Activated T-helper 1 cell treated with anti-CD3 and anti-CD28 coated beads, Interleukin-12 subunit alpha, Interleukin-12 subunit beta, Interleukin-2, Interleukin-4 antibody, amounts not matched to agents 30 ng/mL and 10 ng/mL and 1 ng/mL, durations not matched to agents 14 hours and 24 hours and 36 hours (primary cell): ENCODE measurements at regions of chr3 and their contacts with region 1.

Region 1: DNA sequence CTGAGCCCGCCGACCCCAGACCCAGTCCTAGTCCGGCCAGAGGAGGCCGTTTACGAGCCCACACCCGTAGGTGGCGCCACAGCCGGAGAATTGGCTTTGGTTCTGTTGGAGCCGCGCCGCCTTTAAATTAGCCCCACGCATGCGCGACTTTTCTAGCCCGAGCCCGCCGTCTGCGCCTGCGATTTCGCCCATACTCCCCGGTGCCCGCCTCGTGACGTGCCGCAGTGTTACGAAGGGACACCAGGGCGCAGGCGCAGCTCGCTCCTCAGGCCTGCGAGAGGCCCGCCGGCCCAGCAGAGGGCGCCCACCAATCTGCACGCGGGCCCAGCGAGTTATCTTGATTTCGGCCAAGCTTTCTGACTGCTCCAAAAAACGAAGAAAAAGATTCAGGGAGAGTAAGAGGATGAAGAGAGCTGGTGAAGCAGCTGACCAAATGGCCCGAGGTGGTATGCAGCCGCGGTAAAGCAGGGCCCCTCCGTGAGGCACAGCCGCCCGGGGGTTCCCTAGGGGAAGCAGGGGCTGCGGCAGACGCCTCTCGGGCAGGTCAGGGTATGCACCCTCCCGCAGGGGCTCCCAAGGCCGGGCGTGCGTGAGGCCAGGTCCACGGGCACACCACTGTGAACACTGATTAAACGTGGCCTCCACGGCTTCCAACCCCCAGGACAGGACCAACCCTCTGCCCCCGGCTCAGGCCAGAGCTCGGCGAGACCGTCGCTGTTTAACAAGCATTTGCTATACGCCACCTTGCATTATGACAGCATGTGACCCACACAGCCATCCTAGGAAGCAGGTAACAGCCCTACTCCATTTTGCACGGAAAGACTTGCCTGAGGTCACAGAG is 32.8 kb downstream of the RPN1 start:
- DNase-seq: peak; percentile 98
- H3K4me3 Mint-ChIP-seq: peak overlapping the region; percentile 98
- H3K27ac Mint-ChIP-seq: peak overlapping the region; percentile 97
- H3K4me1 Mint-ChIP-seq: peaks cover 29% of the 10 kb centered on the region
- H3K27me3 Mint-ChIP-seq: no peaks in the 10 kb centered on the region

Region 2: GRCh38 chr3:128123538-128124368 is 494.0 kb before region 1 on chr3 and contains the start of gene RUVBL1:
- intact Hi-C with region 1: loop called (anchors 1 kb)
- DNase-seq: peak; percentile 95
- H3K4me3 Mint-ChIP-seq: peak within 1 kb of the TSS; percentile 99
- H3K27ac Mint-ChIP-seq: peak within 1 kb of the TSS; percentile 99
- H3K4me1 Mint-ChIP-seq: peaks cover 24% of the 10 kb centered on the region
- H3K27me3 Mint-ChIP-seq: peaks cover 1% of the 10 kb centered on the region
- total RNA-seq, gene RUVBL1: 135 and 137 TPM in 2 replicates

Region 3: DNA sequence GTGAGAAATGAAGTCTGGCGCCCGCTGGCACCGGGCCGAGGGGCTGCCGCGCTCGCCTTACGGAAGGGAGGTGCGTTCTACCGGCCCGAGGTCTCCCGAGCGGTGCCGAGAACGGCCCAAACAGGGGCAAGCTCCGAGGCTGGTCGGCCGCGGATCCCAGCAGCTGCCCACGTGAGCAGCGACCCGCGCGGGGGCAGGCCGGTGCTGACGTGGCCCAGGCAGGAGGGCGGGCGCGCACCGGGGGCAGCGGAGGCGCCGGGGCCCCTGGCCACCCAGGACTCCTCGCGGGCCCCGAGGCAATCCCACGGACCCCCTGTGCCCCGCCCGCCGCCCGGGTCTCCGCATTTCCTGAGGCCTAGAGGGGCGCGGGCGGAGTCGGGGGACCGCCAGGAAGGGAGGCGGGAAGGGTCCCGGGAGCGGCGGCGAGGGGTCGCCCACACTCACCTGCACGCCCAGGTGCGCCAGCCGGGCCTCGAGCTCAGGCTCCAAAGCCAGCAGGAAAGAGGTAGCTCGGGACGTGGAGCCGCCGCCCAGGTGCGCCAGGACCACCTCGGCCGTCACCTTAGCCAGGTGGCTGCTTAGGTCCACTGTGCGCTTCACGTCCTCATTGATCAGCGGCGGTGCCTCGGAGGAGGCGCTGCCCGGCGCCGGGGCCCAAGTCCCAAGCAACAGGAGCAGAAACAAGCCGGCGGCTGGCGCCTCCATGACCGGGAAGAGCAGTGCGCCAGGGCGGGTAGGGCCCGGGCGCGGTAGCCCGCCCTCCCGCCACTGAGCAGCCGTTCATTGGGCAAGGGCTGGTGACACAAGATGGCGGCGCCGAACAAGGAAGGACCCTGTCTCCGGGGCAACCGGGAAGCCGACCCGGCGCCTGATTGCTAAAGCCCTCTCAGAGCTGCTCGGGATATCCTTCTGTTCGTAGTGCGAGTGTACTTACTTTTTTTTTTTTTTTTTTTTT is 32.6 kb after region 1 on chr3 and contains the start of gene RPN1:
- intact Hi-C with region 1: loop called (anchors 1 kb)
- DNase-seq: peak; percentile 94
- H3K4me3 Mint-ChIP-seq: peak within 1 kb of the TSS; percentile 90
- H3K27ac Mint-ChIP-seq: peak within 1 kb of the TSS; percentile 92
- H3K4me1 Mint-ChIP-seq: peaks cover 26% of the 10 kb centered on the region
- H3K27me3 Mint-ChIP-seq: no peaks in the 10 kb centered on the region
- total RNA-seq, gene RPN1: 190 and 194 TPM in 2 replicates

Region 4: DNA sequence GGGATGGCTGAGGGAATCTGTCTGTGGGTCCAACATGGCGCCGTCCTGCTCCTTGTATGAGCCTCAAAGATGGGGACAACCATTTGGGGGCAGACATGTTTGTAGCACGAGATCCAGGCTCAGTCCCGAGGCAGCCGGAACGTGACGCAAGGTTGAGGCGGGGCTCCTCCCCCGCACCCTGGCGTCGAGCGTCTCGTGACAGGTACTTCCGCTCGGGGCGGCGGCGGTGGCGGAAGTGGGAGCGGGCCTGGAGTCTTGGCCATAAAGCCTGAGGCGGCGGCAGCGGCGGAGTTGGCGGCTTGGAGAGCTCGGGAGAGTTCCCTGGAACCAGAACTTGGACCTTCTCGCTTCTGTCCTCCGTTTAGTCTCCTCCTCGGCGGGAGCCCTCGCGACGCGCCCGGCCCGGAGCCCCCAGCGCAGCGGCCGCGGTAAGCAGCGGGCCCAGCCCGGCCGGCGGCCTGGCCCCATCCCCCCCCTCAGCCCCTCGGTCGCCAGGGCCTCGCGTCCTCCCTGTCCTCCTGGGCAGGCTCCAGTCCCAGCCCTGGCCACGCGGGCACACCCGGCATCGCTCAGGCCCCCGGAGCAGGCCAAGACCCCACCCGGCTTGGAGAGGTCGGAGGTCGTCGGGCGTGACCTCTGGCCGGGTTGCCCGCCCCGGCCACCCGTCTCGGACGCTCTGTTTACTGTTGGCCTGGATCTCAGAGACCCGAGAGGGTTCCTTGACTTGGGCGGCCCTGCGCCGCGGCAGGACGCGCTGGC is 108.3 kb after region 1 on chr3 and contains the start of gene RAB7A:
- intact Hi-C with region 1: loop called (anchors 1 kb)
- DNase-seq: peak; percentile 94
- H3K4me3 Mint-ChIP-seq: peak within 1 kb of the TSS; percentile 99
- H3K27ac Mint-ChIP-seq: peak within 1 kb of the TSS; percentile 93
- H3K4me1 Mint-ChIP-seq: peaks cover 56% of the 10 kb centered on the region
- H3K27me3 Mint-ChIP-seq: no peaks in the 10 kb centered on the region
- total RNA-seq, gene RAB7A: 318 and 329 TPM in 2 replicates

Region 5: GRCh38 chr3:128794770-128795649 is 177.2 kb after region 1 on chr3:
- intact Hi-C with region 1: loop called (anchors 2 kb)
- DNase-seq: peak; percentile 62
- H3K4me3 Mint-ChIP-seq: peak overlapping the region; percentile 49
- H3K27ac Mint-ChIP-seq: peak overlapping the region; percentile 92
- H3K4me1 Mint-ChIP-seq: peaks cover 79% of the 10 kb centered on the region
- H3K27me3 Mint-ChIP-seq: no peaks in the 10 kb centered on the region

Region 6: GRCh38 chr3:128922804-128923459 is 305.2 kb after region 1 on chr3:
- intact Hi-C with region 1: loop called (anchors 2 kb)
- DNase-seq: peak; percentile 46
- H3K4me3 Mint-ChIP-seq: peak overlapping the region; percentile 67
- H3K27ac Mint-ChIP-seq: peak overlapping the region; percentile 70
- H3K4me1 Mint-ChIP-seq: peaks cover 37% of the 10 kb centered on the region
- H3K27me3 Mint-ChIP-seq: peaks cover 4% of the 10 kb centered on the region